ENCODE measurements at regions of chr11 and their contacts with region 1.

Region 1: DNA sequence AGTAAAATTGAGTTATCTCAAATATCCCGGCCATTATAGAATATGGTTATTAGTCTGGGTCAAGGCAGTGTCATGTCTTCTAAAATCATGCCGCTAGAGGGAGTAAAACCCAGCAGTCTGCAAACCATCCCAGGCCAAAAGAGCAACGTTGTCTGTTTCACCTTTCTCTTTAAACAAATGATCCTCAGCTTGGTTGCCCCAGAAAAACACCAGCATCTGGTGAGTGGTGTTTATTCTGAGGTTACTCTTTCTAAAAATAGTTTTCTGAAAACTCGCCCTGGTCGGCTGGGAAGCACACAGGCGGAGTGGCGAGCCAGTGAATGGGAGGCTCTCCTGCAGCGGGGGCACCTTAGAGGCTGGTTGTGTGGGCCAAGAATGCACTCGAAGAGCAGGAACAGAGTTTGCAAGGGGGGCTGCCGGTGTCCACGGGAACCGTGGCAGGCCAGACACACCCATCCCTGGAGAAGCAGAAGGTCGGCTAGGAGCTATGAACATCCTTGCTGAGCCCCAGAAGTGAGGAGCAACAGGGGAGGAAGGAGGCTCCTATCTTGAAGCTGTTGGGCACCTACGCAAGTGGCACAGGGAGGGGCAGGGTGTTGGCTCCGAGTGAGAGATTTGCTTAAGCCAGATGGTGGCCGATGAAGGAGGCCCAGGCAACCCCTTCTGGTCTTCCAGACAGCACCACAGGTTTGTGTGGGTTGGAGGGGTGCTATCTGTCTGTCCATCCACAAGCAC is 297.1 kb downstream of the ETS1 start:
- DNase-seq: peak; percentile 48 to 94 (median 71)
- ATAC-seq: peak; percentile 67
- H3K4me3 ChIP-seq: peak overlapping the region; percentile 46 to 51
- H3K4me3 Mint-ChIP-seq: peak overlapping the region; percentile 88
- H3K27ac ChIP-seq: peak overlapping the region; percentile 89 to 90
- H3K27ac Mint-ChIP-seq: peak overlapping the region; percentile 100
- H3K4me1 ChIP-seq: peaks cover 79% of the 10 kb centered on the region
- H3K4me1 Mint-ChIP-seq: peaks cover 92% of the 10 kb centered on the region
- H3K27me3 ChIP-seq: no peaks in the 10 kb centered on the region
- H3K27me3 Mint-ChIP-seq: no peaks in the 10 kb centered on the region
- CTCF ChIP-seq: peak; percentile 92

Region 2: GRCh38 chr11:128026596-128026995 is 263.7 kb before region 1 on chr11:
- CTCF ChIA-PET with region 1: no interaction called
- POLR2A ChIA-PET with region 1: no interaction called
- intact Hi-C with region 1: loop called (anchors 2 to 5 kb)
- DNase-seq: no peak
- ATAC-seq: no peak
- H3K4me3 ChIP-seq: no peak overlapping the region
- H3K4me3 Mint-ChIP-seq: no peak overlapping the region
- H3K27ac ChIP-seq: no peak overlapping the region
- H3K27ac Mint-ChIP-seq: no peak overlapping the region
- H3K4me1 ChIP-seq: no peaks in the 10 kb centered on the region
- H3K4me1 Mint-ChIP-seq: peaks cover 2% of the 10 kb centered on the region
- H3K27me3 ChIP-seq: no peaks in the 10 kb centered on the region
- H3K27me3 Mint-ChIP-seq: peaks cover 5% of the 10 kb centered on the region
- CTCF ChIP-seq: no peak

Region 3: DNA sequence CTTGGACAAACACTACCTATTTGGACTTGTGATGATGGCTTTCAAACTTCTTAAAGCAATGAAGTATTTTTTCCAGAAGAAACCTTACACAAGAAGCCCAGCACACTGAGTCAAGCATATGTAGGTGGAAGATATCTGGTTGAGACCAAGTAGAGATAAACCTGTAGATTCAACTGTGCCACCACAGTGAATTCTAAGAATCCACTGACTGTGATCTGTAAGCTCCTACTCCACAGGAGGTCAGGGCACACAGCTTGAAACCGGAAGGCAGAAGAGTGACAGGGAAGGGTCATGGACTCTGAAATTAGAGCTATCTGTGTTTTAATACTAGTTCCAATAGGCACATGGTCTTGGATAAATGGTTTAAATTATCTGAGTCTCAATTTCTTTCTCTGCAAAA is 107.4 kb before region 1 on chr11:
- CTCF ChIA-PET with region 1: no interaction called
- POLR2A ChIA-PET with region 1: no interaction called
- intact Hi-C with region 1: no loop called
- DNase-seq: no peak
- ATAC-seq: no peak
- H3K4me3 ChIP-seq: no peak overlapping the region
- H3K4me3 Mint-ChIP-seq: no peak overlapping the region
- H3K27ac ChIP-seq: no peak overlapping the region
- H3K27ac Mint-ChIP-seq: no peak overlapping the region
- H3K4me1 ChIP-seq: no peaks in the 10 kb centered on the region
- H3K4me1 Mint-ChIP-seq: no peaks in the 10 kb centered on the region
- H3K27me3 ChIP-seq: no peaks in the 10 kb centered on the region
- H3K27me3 Mint-ChIP-seq: no peaks in the 10 kb centered on the region
- CTCF ChIP-seq: no peak

Region 4: DNA sequence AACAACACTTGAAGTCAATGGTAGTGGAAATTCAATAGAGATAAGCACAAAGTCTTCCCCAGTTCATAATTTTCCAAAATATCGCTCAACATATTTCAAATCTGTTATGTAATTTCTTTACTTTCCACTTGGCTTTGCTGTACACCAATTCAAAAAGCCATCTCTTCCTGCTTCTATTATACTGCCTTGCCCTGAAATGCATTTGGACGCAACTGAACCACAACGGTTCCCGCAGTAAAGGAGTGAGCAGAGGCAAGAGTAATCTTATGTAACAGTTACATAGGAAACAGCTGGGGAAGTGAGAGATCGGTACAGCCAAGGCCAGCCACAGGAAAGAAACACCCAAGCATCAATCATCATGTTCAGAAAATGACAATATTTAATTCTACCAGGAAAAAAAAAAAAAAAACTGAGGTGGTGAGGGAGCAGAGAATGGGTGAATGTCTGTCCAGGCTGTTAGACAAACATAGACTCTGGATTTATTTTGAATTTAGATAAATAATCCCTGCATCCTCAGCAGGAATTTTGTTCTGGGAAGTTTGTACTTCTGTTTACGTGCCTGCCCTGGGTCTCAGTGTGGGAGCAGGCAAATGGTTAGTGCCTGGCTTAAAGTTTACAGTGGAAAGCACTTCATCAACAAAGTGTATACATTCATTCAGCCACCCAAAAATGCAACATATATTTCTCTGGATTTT is 95.1 kb before region 1 on chr11:
- CTCF ChIA-PET with region 1: interaction called, 4 read pairs
- POLR2A ChIA-PET with region 1: interaction called, 4 read pairs
- intact Hi-C with region 1: loop called (anchors 5 kb)
- DNase-seq: peak; percentile 8 to 88 (median 44)
- ATAC-seq: peak; percentile 86
- H3K4me3 ChIP-seq: no peak overlapping the region
- H3K4me3 Mint-ChIP-seq: peak overlapping the region; percentile 23
- H3K27ac ChIP-seq: peak overlapping the region in 1 of 2 experiments; percentile 60
- H3K27ac Mint-ChIP-seq: peak overlapping the region; percentile 57
- H3K4me1 ChIP-seq: peaks cover 34% of the 10 kb centered on the region
- H3K4me1 Mint-ChIP-seq: peaks cover 32% of the 10 kb centered on the region
- H3K27me3 ChIP-seq: no peaks in the 10 kb centered on the region
- H3K27me3 Mint-ChIP-seq: no peaks in the 10 kb centered on the region
- CTCF ChIP-seq: peak; percentile 55

Region 5: DNA sequence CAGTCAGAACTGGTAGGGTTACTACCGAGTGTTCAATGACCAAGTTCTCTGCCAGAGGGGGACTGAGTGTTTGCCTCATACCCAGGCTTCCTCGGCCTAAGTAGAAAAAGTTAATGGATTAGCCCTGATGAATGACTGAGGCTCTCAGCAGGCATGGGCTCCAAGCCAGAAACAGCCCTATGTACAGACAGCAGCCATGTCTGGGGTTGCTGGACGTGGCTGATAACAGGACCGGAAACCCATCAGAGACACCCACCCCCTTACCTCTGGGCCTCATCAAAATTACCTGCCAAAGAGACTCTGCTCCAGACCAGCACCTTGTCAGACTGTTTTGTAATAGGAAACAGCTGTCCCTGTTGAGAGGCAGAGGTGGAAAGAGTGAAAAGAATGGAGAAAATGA is 54.3 kb before region 1 on chr11:
- CTCF ChIA-PET with region 1: no interaction called
- POLR2A ChIA-PET with region 1: no interaction called
- intact Hi-C with region 1: no loop called
- DNase-seq: no peak
- ATAC-seq: no peak
- H3K4me3 ChIP-seq: no peak overlapping the region
- H3K4me3 Mint-ChIP-seq: no peak overlapping the region
- H3K27ac ChIP-seq: no peak overlapping the region
- H3K27ac Mint-ChIP-seq: no peak overlapping the region
- H3K4me1 ChIP-seq: peaks cover 5% of the 10 kb centered on the region
- H3K4me1 Mint-ChIP-seq: peaks cover 12% of the 10 kb centered on the region
- H3K27me3 ChIP-seq: no peaks in the 10 kb centered on the region
- H3K27me3 Mint-ChIP-seq: no peaks in the 10 kb centered on the region
- CTCF ChIP-seq: no peak

Region 6: GRCh38 chr11:128379587-128380580 is 89.6 kb after region 1 on chr11:
- CTCF ChIA-PET with region 1: no interaction called
- POLR2A ChIA-PET with region 1: no interaction called
- intact Hi-C with region 1: loop called in 1 of 2 experiments (anchors 5 kb)
- DNase-seq: peak in 6 of 9 experiments; percentile 8 to 56 (median 32)
- ATAC-seq: peak; percentile 85
- H3K4me3 ChIP-seq: no peak overlapping the region
- H3K4me3 Mint-ChIP-seq: no peak overlapping the region
- H3K27ac ChIP-seq: no peak overlapping the region
- H3K27ac Mint-ChIP-seq: peak overlapping the region; percentile 60
- H3K4me1 ChIP-seq: peaks cover 16% of the 10 kb centered on the region
- H3K4me1 Mint-ChIP-seq: peaks cover 31% of the 10 kb centered on the region
- H3K27me3 ChIP-seq: no peaks in the 10 kb centered on the region
- H3K27me3 Mint-ChIP-seq: no peaks in the 10 kb centered on the region
- CTCF ChIP-seq: no peak

Region 7: GRCh38 chr11:128463371-128463829 is 173.1 kb after region 1 on chr11:
- CTCF ChIA-PET with region 1: interaction called, 28 read pairs
- POLR2A ChIA-PET with region 1: interaction called, 10 read pairs
- intact Hi-C with region 1: loop called in 1 of 2 experiments (anchors 2 kb)
- DNase-seq: peak in 1 of 9 experiments; percentile 19
- ATAC-seq: no peak
- H3K4me3 ChIP-seq: no peak overlapping the region
- H3K4me3 Mint-ChIP-seq: peak overlapping the region; percentile 70
- H3K27ac ChIP-seq: peak overlapping the region; percentile 68 to 88
- H3K27ac Mint-ChIP-seq: peak overlapping the region; percentile 94
- H3K4me1 ChIP-seq: peaks cover 89% of the 10 kb centered on the region
- H3K4me1 Mint-ChIP-seq: peaks cover 97% of the 10 kb centered on the region
- H3K27me3 ChIP-seq: no peaks in the 10 kb centered on the region
- H3K27me3 Mint-ChIP-seq: no peaks in the 10 kb centered on the region
- CTCF ChIP-seq: no peak

Region 8: GRCh38 chr11:128497061-128497775 is 206.9 kb after region 1 on chr11:
- CTCF ChIA-PET with region 1: interaction called, 15 read pairs
- POLR2A ChIA-PET with region 1: interaction called, 10 read pairs
- intact Hi-C with region 1: loop called in 1 of 2 experiments (anchors 5 kb)
- DNase-seq: peak in 2 of 9 experiments; percentile 51 to 64
- ATAC-seq: no peak
- H3K4me3 ChIP-seq: peak overlapping the region; percentile 24 to 43
- H3K4me3 Mint-ChIP-seq: peak overlapping the region; percentile 83
- H3K27ac ChIP-seq: peak overlapping the region; percentile 49 to 75
- H3K27ac Mint-ChIP-seq: peak overlapping the region; percentile 98
- H3K4me1 ChIP-seq: peaks cover 98% of the 10 kb centered on the region
- H3K4me1 Mint-ChIP-seq: peaks cover 96% of the 10 kb centered on the region
- H3K27me3 ChIP-seq: no peaks in the 10 kb centered on the region
- H3K27me3 Mint-ChIP-seq: no peaks in the 10 kb centered on the region
- CTCF ChIP-seq: no peak

Region 9: GRCh38 chr11:128757235-128757711 is 467.0 kb after region 1 on chr11:
- CTCF ChIA-PET with region 1: interaction called, 3 read pairs
- POLR2A ChIA-PET with region 1: no interaction called
- intact Hi-C with region 1: loop called (anchors 1 to 5 kb)
- DNase-seq: peak; percentile 48 to 90 (median 71)
- ATAC-seq: peak; percentile 99
- H3K4me3 ChIP-seq: no peak overlapping the region
- H3K4me3 Mint-ChIP-seq: peak overlapping the region; percentile 35
- H3K27ac ChIP-seq: peak overlapping the region in 1 of 2 experiments; percentile 30
- H3K27ac Mint-ChIP-seq: peak overlapping the region; percentile 88
- H3K4me1 ChIP-seq: peaks cover 67% of the 10 kb centered on the region
- H3K4me1 Mint-ChIP-seq: peaks cover 89% of the 10 kb centered on the region
- H3K27me3 ChIP-seq: no peaks in the 10 kb centered on the region
- H3K27me3 Mint-ChIP-seq: no peaks in the 10 kb centered on the region
- CTCF ChIP-seq: peak; percentile 76

Region 10: GRCh38 chr11:128917144-128917724 is 627.0 kb after region 1 on chr11:
- CTCF ChIA-PET with region 1: no interaction called
- POLR2A ChIA-PET with region 1: no interaction called
- intact Hi-C with region 1: no loop called
- DNase-seq: peak in 2 of 9 experiments; percentile 17 to 23
- ATAC-seq: no peak
- H3K4me3 ChIP-seq: no peak overlapping the region
- H3K4me3 Mint-ChIP-seq: no peak overlapping the region
- H3K27ac ChIP-seq: no peak overlapping the region
- H3K27ac Mint-ChIP-seq: no peak overlapping the region
- H3K4me1 ChIP-seq: no peaks in the 10 kb centered on the region
- H3K4me1 Mint-ChIP-seq: no peaks in the 10 kb centered on the region
- H3K27me3 ChIP-seq: no peaks in the 10 kb centered on the region
- H3K27me3 Mint-ChIP-seq: peaks cover 14% of the 10 kb centered on the region
- CTCF ChIP-seq: no peak